Activated CD4-positive, alpha-beta memory T cell treated with anti-CD3 and anti-CD28 coated beads for 36 hours (primary cell): ENCODE measurements at regions of chr1 and their contacts with region 1.

Region 1: GRCh38 chr1:209692745-209693504 is 11.7 kb upstream of the HSD11B1 start:
- DNase-seq: peak; percentile 83
- H3K4me3 Mint-ChIP-seq: peak overlapping the region; percentile 22
- H3K27ac Mint-ChIP-seq: peak overlapping the region; percentile 7
- H3K4me1 Mint-ChIP-seq: peaks cover 61% of the 10 kb centered on the region
- H3K27me3 Mint-ChIP-seq: no peaks in the 10 kb centered on the region

Region 2: DNA sequence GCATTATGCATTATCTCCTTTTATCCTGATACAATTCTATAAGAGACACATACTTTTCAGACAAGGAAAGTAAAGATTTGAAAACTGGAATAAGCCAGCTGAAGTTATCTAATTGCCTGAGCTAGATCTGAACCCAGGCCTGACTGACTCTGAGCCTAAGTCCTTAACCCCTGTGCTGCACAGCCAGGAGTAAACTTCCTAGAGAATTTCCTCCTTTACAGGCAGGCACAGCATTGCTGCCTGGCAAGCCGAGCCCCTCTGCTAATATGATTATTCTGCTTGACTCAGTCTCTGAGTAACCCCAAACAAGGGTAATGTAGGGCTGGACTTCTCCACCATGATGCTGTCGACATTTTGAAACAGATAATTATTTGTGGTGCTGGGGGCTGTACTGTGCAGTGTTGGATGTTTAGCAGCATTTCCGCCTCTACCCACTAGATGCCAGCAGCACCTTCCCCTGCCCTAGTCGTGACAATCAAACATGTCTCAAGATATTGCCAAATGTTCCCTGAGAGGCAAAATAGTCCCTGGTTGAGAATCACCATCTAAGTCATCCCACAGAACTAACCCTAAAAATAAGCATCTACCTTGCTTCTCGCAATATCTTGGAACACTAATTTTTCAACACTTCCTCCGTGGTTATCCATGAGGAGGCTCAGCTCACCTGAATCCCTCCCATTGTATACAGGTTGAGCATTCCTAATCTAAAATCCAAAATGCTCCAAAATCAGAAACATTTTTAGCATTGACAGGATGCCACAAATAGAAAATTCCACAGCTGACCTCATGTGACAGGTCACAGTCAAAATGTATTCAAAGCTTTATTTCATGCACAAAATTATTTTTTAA is 90.9 kb before region 1 on chr1:
- CTCF ChIA-PET with region 1: interaction called, 33 read pairs
- POLR2A ChIA-PET with region 1: no interaction called
- intact Hi-C with region 1: loop called (anchors 2 kb)
- DNase-seq: peak; percentile 67
- H3K4me3 Mint-ChIP-seq: no peak overlapping the region
- H3K27ac Mint-ChIP-seq: no peak overlapping the region
- H3K4me1 Mint-ChIP-seq: peaks cover 3% of the 10 kb centered on the region
- H3K27me3 Mint-ChIP-seq: peaks cover 3% of the 10 kb centered on the region

Region 3: DNA sequence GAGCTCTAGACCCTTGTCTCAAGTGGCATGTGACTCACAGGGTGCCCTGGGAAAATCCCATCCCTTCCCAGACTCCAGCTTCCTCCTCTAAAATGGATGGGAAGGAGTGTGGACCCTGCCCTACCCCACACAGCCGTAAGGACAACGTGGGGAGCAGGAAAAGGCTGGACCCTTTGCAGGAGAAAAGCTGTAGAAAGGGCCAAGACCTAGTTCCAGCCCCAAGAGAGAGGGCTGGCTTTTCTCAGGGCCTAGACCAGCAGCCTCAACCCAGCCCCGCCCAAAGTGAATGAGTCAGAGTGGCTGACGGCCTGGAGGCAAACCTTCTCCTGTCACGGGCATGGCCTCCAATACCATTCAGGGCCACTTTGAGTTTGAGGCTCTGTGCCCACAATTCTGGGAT is 41.8 kb before region 1 on chr1:
- CTCF ChIA-PET with region 1: interaction called, 8 read pairs
- POLR2A ChIA-PET with region 1: no interaction called
- intact Hi-C with region 1: loop called (anchors 1 kb)
- DNase-seq: peak; percentile 90
- H3K4me3 Mint-ChIP-seq: no peak overlapping the region
- H3K27ac Mint-ChIP-seq: peak overlapping the region; percentile 59
- H3K4me1 Mint-ChIP-seq: peaks cover 57% of the 10 kb centered on the region
- H3K27me3 Mint-ChIP-seq: no peaks in the 10 kb centered on the region

Region 4: GRCh38 chr1:209704584-209704983 is 11.7 kb after region 1 on chr1 and contains the start of gene HSD11B1:
- CTCF ChIA-PET with region 1: interaction called, 10 read pairs
- POLR2A ChIA-PET with region 1: interaction called, 3 read pairs
- intact Hi-C with region 1: no loop called
- DNase-seq: peak; percentile 17
- H3K4me3 Mint-ChIP-seq: peak within 1 kb of the TSS; percentile 54
- H3K27ac Mint-ChIP-seq: peak within 1 kb of the TSS; percentile 91
- H3K4me1 Mint-ChIP-seq: peaks cover 78% of the 10 kb centered on the region
- H3K27me3 Mint-ChIP-seq: no peaks in the 10 kb centered on the region
- total RNA-seq, gene HSD11B1: 22.4 to 23.9 TPM

Region 5: DNA sequence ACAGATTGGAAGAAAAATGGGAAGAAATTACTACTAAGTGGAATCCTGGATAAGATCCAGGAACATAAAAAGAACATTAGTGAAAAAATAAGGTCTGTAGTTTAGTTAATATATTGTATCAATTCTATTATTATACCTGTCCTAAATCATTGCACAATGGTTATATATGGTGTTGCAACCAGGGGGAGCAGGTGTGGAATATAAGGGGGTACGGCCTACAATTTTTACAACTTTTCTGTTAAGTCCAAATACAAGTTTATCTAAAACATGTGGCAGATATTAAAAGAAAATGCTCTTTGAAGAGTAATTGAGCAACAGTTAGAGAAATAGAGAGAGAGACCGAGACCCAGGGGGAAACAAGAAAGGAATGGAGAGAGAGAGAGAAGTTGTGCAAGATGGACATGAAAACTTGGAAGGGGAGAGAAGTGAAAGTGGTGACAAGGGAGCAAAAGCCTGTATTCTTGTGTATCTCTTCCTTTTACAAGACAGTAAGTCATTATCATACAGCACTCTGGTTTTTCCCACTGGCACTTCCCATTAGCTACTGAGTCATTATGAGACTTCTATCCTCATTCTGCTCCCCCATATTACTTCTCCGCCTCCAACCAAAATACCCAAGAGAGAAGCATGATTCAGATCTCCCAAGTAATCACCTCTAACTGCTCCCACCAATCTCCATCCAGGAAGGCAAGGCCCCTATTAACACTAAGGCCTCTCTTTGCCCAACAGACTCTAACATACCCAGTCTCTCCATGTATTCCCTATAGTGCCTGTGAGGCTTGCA is 40.7 kb after region 1 on chr1:
- CTCF ChIA-PET with region 1: interaction called, 13 read pairs
- POLR2A ChIA-PET with region 1: no interaction called
- intact Hi-C with region 1: no loop called
- DNase-seq: no peak
- H3K4me3 Mint-ChIP-seq: peak overlapping the region; percentile 54
- H3K27ac Mint-ChIP-seq: peak overlapping the region; percentile 75
- H3K4me1 Mint-ChIP-seq: peaks cover 49% of the 10 kb centered on the region
- H3K27me3 Mint-ChIP-seq: no peaks in the 10 kb centered on the region

Region 6: DNA sequence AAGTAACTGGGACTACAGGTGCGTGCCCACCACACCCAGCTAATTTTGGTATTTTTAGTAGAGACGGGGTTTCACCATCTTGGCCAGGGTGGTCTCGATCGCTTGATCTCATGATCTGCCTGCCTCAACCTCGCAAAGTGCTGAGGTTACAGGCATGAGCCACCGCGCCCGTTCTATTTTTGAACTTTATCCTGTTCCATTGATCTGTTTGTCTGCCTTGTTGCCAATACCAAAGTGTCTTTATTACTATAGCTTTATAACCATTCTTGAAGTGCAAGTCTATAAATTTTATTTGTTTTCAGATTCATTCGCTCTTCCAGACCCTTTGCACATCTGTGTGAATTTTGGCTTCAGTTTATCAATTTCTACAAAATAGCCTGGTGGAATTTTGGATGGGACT is 273.1 kb after region 1 on chr1:
- CTCF ChIA-PET with region 1: no interaction called
- POLR2A ChIA-PET with region 1: no interaction called
- intact Hi-C with region 1: no loop called
- DNase-seq: no peak
- H3K4me3 Mint-ChIP-seq: no peak overlapping the region
- H3K27ac Mint-ChIP-seq: no peak overlapping the region
- H3K4me1 Mint-ChIP-seq: no peaks in the 10 kb centered on the region
- H3K27me3 Mint-ChIP-seq: peaks cover 5% of the 10 kb centered on the region

Region 7: DNA sequence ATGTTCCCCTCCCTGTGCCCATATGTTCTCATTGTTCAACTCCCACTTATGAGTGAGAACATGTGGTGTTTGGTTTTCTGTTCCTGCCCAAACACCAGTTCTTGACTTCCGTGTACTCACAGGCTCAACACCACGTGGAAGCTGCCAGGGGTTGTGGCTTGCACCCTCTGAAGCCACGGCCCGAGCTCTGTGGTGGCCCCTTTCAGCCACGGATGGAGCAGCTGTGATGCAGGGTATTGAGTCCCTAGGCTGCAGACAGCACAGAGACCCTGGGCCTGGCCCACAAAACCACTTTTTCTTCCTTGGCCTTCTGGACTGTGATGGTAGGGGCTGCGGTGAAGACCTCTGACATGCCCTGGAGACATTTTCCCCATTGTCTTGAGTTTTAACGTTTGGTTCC is 356.7 kb after region 1 on chr1:
- CTCF ChIA-PET with region 1: no interaction called
- POLR2A ChIA-PET with region 1: no interaction called
- intact Hi-C with region 1: no loop called
- DNase-seq: no peak
- H3K4me3 Mint-ChIP-seq: no peak overlapping the region
- H3K27ac Mint-ChIP-seq: no peak overlapping the region
- H3K4me1 Mint-ChIP-seq: no peaks in the 10 kb centered on the region
- H3K27me3 Mint-ChIP-seq: no peaks in the 10 kb centered on the region